ENCODE measurements at regions of chr7 and their contacts with region 1.

Region 1: GRCh38 chr7:45917658-45918057 is 3.4 kb downstream of the IGFBP3 start:
- DNase-seq: peak; percentile 27 to 82 (median 63)
- ATAC-seq: peak; percentile 50
- H3K4me3 ChIP-seq: no peak overlapping the region
- H3K4me3 Mint-ChIP-seq: no peak overlapping the region
- H3K27ac ChIP-seq: no peak overlapping the region
- H3K27ac Mint-ChIP-seq: no peak overlapping the region
- H3K4me1 ChIP-seq: peaks cover 0 to 10% of the 10 kb centered on the region in 2 donors
- H3K4me1 Mint-ChIP-seq: peaks cover 7 to 26% (median 18%) of the 10 kb centered on the region in 7 donors
- H3K27me3 ChIP-seq: peaks cover 0 to 6% of the 10 kb centered on the region in 2 donors
- H3K27me3 Mint-ChIP-seq: peaks cover 40 to 58% (median 50%) of the 10 kb centered on the region in 5 donors

Region 2: DNA sequence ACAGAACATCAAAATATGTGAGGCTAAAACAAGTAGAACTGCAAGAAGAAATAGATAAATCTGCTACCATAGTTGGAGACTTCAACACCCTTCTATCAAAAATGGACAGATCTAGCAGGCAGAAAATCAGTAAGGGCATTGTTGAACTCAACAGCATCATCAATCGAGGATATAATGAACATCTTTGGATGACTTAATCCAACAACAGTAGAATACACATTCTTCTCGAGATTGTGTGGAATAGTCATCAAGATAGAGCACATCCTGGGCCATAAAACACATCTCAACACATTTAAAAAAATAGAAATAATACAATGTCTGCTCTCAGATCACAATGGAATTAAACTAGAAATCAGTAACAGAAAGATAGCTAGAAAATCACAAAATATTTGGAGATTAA is 19.4 kb before region 1 on chr7:
- CTCF ChIA-PET with region 1: no interaction called
- POLR2A ChIA-PET with region 1: no interaction called
- intact Hi-C with region 1: no loop called
- DNase-seq: no peak
- ATAC-seq: no peak
- H3K4me3 ChIP-seq: no peak overlapping the region
- H3K4me3 Mint-ChIP-seq: no peak overlapping the region
- H3K27ac ChIP-seq: no peak overlapping the region
- H3K27ac Mint-ChIP-seq: no peak overlapping the region
- H3K4me1 ChIP-seq: no peaks in the 10 kb centered on the region
- H3K4me1 Mint-ChIP-seq: peaks cover 0 to 2% (median 0%) of the 10 kb centered on the region in 7 donors
- H3K27me3 ChIP-seq: no peaks in the 10 kb centered on the region
- H3K27me3 Mint-ChIP-seq: peaks cover 11 to 64% (median 51%) of the 10 kb centered on the region in 5 donors

Region 3: DNA sequence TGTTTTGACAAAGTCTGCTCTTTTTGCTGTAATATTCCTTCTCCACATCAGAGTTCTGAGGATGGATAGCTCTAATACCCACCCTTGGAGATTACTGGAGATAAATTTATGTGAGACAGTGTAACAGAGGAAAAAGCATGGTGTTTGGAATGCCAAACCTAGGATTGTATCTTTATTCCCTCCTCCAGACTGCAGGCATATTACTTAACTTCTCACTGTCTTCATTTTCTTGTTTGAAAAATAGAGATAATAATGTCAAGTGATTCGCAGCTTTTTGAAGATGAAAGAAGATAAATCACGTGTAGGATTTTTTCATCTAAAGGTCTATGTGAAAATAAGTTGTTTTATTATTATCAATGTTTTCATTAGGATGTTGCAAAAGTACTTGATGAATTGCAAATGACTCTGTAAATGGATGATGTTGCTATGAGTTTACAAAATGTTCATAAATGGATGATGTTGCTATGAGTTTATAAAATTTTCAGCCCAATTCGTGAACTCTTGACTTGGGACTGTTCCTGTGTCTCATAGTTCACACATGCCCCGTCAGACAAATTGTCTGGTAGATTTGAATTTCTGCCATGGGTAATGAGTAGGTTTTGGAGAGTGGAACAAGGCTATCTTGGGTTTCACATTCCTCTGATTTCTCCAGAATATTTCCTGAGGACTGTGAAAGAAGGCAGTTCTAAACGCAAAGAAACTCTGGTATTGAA is 116.6 kb after region 1 on chr7:
- CTCF ChIA-PET with region 1: no interaction called
- POLR2A ChIA-PET with region 1: no interaction called
- intact Hi-C with region 1: no loop called
- DNase-seq: no peak
- ATAC-seq: no peak
- H3K4me3 ChIP-seq: no peak overlapping the region
- H3K4me3 Mint-ChIP-seq: no peak overlapping the region
- H3K27ac ChIP-seq: no peak overlapping the region
- H3K27ac Mint-ChIP-seq: no peak overlapping the region
- H3K4me1 ChIP-seq: no peaks in the 10 kb centered on the region
- H3K4me1 Mint-ChIP-seq: no peaks in the 10 kb centered on the region
- H3K27me3 ChIP-seq: no peaks in the 10 kb centered on the region
- H3K27me3 Mint-ChIP-seq: no peaks in the 10 kb centered on the region

Region 4: GRCh38 chr7:46352004-46352954 is 434.6 kb after region 1 on chr7:
- CTCF ChIA-PET with region 1: interaction called, 5 read pairs
- POLR2A ChIA-PET with region 1: no interaction called
- intact Hi-C with region 1: loop called (anchors 1 kb)
- DNase-seq: peak in 2 of 9 donors; percentile 1 to 4
- ATAC-seq: no peak
- H3K4me3 ChIP-seq: no peak overlapping the region
- H3K4me3 Mint-ChIP-seq: no peak overlapping the region
- H3K27ac ChIP-seq: no peak overlapping the region
- H3K27ac Mint-ChIP-seq: no peak overlapping the region
- H3K4me1 ChIP-seq: no peaks in the 10 kb centered on the region
- H3K4me1 Mint-ChIP-seq: no peaks in the 10 kb centered on the region
- H3K27me3 ChIP-seq: no peaks in the 10 kb centered on the region
- H3K27me3 Mint-ChIP-seq: peaks cover 0 to 7% (median 0%) of the 10 kb centered on the region in 5 donors

Region 5: GRCh38 chr7:46859963-46860475 is 942.4 kb after region 1 on chr7:
- CTCF ChIA-PET with region 1: no interaction called
- POLR2A ChIA-PET with region 1: no interaction called
- intact Hi-C with region 1: loop called in 1 of 2 experiments (anchors 10 kb)
- DNase-seq: no peak
- ATAC-seq: no peak
- H3K4me3 ChIP-seq: no peak overlapping the region
- H3K4me3 Mint-ChIP-seq: no peak overlapping the region
- H3K27ac ChIP-seq: no peak overlapping the region
- H3K27ac Mint-ChIP-seq: no peak overlapping the region
- H3K4me1 ChIP-seq: no peaks in the 10 kb centered on the region
- H3K4me1 Mint-ChIP-seq: peaks cover 0 to 4% (median 0%) of the 10 kb centered on the region in 7 donors
- H3K27me3 ChIP-seq: no peaks in the 10 kb centered on the region
- H3K27me3 Mint-ChIP-seq: peaks cover 0 to 6% (median 0%) of the 10 kb centered on the region in 5 donors

Region 6: GRCh38 chr7:47088329-47089067 is 1170.8 kb after region 1 on chr7:
- CTCF ChIA-PET with region 1: interaction called, 6 read pairs
- POLR2A ChIA-PET with region 1: interaction called, 4 read pairs
- intact Hi-C with region 1: loop called (anchors 1 kb)
- DNase-seq: peak in 5 of 9 donors; percentile 2 to 18 (median 6)
- ATAC-seq: no peak
- H3K4me3 ChIP-seq: no peak overlapping the region
- H3K4me3 Mint-ChIP-seq: no peak overlapping the region
- H3K27ac ChIP-seq: no peak overlapping the region
- H3K27ac Mint-ChIP-seq: no peak overlapping the region
- H3K4me1 ChIP-seq: no peaks in the 10 kb centered on the region
- H3K4me1 Mint-ChIP-seq: no peaks in the 10 kb centered on the region
- H3K27me3 ChIP-seq: peaks cover 0 to 3% of the 10 kb centered on the region in 2 donors
- H3K27me3 Mint-ChIP-seq: peaks cover 0 to 23% (median 11%) of the 10 kb centered on the region in 5 donors

Region 7: GRCh38 chr7:47179812-47180515 is 1262.3 kb after region 1 on chr7:
- CTCF ChIA-PET with region 1: no interaction called
- POLR2A ChIA-PET with region 1: no interaction called
- intact Hi-C with region 1: loop called (anchors 1 to 10 kb)
- DNase-seq: no peak
- ATAC-seq: no peak
- H3K4me3 ChIP-seq: no peak overlapping the region
- H3K4me3 Mint-ChIP-seq: no peak overlapping the region
- H3K27ac ChIP-seq: no peak overlapping the region
- H3K27ac Mint-ChIP-seq: no peak overlapping the region
- H3K4me1 ChIP-seq: no peaks in the 10 kb centered on the region
- H3K4me1 Mint-ChIP-seq: no peaks in the 10 kb centered on the region
- H3K27me3 ChIP-seq: no peaks in the 10 kb centered on the region
- H3K27me3 Mint-ChIP-seq: peaks cover 0 to 6% (median 0%) of the 10 kb centered on the region in 5 donors

Region 8: GRCh38 chr7:47254081-47255006 is 1336.7 kb after region 1 on chr7:
- CTCF ChIA-PET with region 1: no interaction called
- POLR2A ChIA-PET with region 1: no interaction called
- intact Hi-C with region 1: loop called in 1 of 2 experiments (anchors 2 kb)
- DNase-seq: peak in 7 of 9 donors; percentile 17 to 75 (median 39)
- ATAC-seq: peak; percentile 84
- H3K4me3 ChIP-seq: no peak overlapping the region
- H3K4me3 Mint-ChIP-seq: peak overlapping the region; percentile 42 to 81 (median 72)
- H3K27ac ChIP-seq: no peak overlapping the region
- H3K27ac Mint-ChIP-seq: no peak overlapping the region
- H3K4me1 ChIP-seq: no peaks in the 10 kb centered on the region
- H3K4me1 Mint-ChIP-seq: peaks cover 0 to 28% (median 20%) of the 10 kb centered on the region in 7 donors
- H3K27me3 ChIP-seq: peaks cover 0 to 2% of the 10 kb centered on the region in 2 donors
- H3K27me3 Mint-ChIP-seq: peaks cover 17 to 43% (median 28%) of the 10 kb centered on the region in 5 donors

Region 9: DNA sequence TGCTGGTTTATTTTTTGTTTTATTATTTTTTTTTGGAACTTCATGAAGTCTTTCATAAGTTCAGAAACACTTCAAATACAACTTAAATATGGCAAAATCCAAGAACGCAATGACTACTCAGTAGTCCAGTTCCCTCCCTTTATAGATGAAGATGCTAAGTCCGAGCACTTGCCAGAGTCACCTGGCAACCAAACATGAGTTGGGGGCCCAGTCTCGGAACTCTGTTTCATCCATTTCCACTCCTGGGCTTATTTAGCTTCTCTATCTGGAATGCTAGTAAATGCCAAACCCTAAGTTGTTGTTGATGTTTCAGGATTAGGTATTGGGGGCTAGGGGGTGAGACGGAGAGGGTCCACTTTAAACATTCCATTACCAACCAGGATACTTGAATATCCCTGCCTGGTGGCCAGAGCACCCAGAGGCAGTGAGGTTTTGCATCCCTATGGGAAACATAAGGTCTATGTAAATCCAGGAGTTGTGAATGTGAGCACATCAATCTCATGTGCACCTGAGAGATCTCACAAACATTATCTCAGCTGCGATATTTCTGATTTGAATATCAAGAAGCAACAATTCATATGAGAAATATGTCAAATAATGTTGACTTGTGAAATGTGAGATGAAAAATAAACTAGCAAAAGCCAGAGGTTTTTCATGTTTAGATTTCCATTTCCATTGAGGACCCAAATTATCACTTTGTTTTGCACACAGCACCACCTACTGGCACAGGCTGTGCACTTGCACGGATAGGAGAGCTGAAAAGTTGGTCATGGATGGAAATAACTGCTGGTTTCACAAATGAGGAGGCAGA is 1901.3 kb after region 1 on chr7:
- CTCF ChIA-PET with region 1: no interaction called
- POLR2A ChIA-PET with region 1: no interaction called
- intact Hi-C with region 1: loop called in 1 of 2 experiments (anchors 2 kb)
- DNase-seq: peak in 4 of 9 donors; percentile 19 to 43 (median 24)
- ATAC-seq: no peak
- H3K4me3 ChIP-seq: no peak overlapping the region
- H3K4me3 Mint-ChIP-seq: no peak overlapping the region
- H3K27ac ChIP-seq: no peak overlapping the region
- H3K27ac Mint-ChIP-seq: no peak overlapping the region
- H3K4me1 ChIP-seq: no peaks in the 10 kb centered on the region
- H3K4me1 Mint-ChIP-seq: no peaks in the 10 kb centered on the region
- H3K27me3 ChIP-seq: no peaks in the 10 kb centered on the region
- H3K27me3 Mint-ChIP-seq: peaks cover 0 to 2% (median 0%) of the 10 kb centered on the region in 5 donors

Measured in naive thymus-derived CD4-positive, alpha-beta T cell (primary cell).